ENCODE measurements at regions of chr18 and their contacts with region 1.

Region 1: DNA sequence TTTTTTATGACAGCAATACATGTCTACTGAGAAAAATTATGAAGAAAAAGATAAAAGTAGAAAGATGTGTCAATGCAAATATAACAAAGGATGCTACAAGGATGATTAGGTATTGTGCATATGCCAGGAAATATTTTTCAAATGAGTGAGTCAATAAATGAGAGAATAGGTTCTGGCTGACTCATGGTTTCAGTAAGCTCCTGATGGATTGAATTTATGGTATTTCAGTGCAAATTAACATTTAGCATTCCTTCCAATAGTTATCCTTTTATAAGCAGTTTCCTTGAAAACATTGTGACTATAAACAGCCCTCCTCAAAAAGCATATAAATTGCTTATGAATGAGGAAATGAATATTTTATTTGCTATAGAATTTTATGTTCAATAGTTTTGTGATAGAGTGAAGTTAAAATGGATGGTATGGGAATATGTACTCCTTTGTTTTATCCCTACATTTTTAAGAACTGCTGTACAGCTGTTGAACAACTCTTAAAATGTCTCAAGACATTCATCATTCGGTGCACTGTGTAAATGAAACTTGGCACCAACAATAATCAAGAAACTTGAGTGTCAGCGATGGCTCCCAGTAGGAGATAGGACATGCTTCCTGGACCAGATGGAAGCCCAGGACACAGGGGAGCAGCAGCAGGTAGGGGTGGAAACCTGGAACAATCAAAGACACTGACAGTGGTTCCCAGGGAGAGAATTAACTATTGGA is 144.7 kb downstream of the PMAIP1 start:
- DNase-seq: no peak
- ATAC-seq: no peak
- H3K4me3 Mint-ChIP-seq: no peak overlapping the region
- H3K27ac Mint-ChIP-seq: no peak overlapping the region
- H3K4me1 Mint-ChIP-seq: no peaks in the 10 kb centered on the region
- H3K27me3 Mint-ChIP-seq: no peaks in the 10 kb centered on the region

Region 2: DNA sequence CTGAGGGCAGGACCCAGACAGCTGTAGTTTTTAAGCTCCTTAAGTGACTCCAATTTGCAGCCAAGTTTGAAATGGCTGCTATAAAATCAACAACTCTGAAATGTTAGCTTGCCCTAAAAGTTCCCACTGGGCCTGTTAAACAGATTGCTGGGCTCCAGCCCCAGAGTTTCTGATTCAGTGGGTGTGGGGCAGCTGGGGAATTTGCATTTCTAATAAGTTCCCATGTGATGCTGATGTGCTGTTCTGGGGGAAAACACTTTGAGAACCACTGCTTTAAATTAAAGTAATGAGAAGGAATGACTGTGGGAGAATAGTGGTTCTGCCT is 23.9 kb before region 1 on chr18:
- CTCF ChIA-PET with region 1: interaction called, 3 read pairs
- POLR2A ChIA-PET with region 1: no interaction called
- intact Hi-C with region 1: loop called in 1 of 2 experiments (anchors 2 kb)
- DNase-seq: no peak
- ATAC-seq: no peak
- H3K4me3 Mint-ChIP-seq: no peak overlapping the region
- H3K27ac Mint-ChIP-seq: no peak overlapping the region
- H3K4me1 Mint-ChIP-seq: no peaks in the 10 kb centered on the region
- H3K27me3 Mint-ChIP-seq: peaks cover 4% of the 10 kb centered on the region

Measured in activated CD4-positive, alpha-beta T cell treated with anti-CD3 and anti-CD28 coated beads for 36 hours (primary cell).